ENCODE measurements at regions of chr1 and their contacts with region 1.

Region 1: GRCh38 chr1:48227165-48228013 is 4.9 kb downstream of the SLC5A9 start:
- DNase-seq: peak; percentile 63 to 82 (median 72)
- H3K4me3 ChIP-seq: peak overlapping the region in 1 of 3 experiments; percentile 6
- H3K4me3 Mint-ChIP-seq: no peak overlapping the region
- H3K27ac ChIP-seq: peak overlapping the region; percentile 52 to 65
- H3K27ac Mint-ChIP-seq: no peak overlapping the region
- H3K4me1 ChIP-seq: peaks cover 37 to 38% of the 10 kb centered on the region in 2 donors
- H3K4me1 Mint-ChIP-seq: peaks cover 18% of the 10 kb centered on the region
- H3K27me3 ChIP-seq: no peaks in the 10 kb centered on the region
- H3K27me3 Mint-ChIP-seq: peaks cover 2 to 8% (median 2%) of the 10 kb centered on the region in 3 donors
- CTCF ChIP-seq: no peak

Region 2: DNA sequence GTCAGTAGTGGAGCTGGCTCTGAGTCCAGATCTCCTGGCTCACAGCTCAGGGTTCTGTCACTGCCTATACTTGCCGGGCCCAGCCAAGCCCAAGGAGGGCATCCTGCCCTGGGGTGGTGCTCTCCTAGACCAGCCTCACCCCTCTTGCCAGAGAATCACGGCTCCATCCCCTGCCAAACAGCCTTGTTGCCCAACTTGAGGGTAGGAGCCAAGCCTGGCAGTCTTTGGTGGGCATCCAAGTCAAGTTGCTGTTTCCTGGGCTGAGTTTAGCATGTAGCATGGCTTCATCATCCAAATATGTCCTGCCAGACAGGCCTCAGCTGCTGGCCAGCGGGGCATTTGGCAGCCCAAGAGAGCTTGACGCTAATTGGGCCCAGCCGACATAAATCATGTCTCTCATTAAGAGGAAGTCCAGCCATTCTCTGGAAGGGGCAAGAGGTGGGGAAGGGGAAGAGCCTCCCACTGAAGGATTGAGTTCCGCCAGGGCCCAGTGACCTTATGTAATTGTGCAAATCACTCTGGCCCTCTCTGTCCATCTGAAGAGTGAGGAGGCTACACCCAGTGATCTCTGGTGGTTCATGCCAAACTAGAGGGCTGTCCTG is 207.6 kb before region 1 on chr1:
- intact Hi-C with region 1: loop called in 1 of 2 experiments (anchors 10 kb)
- DNase-seq: no peak
- H3K4me3 ChIP-seq: no peak overlapping the region
- H3K4me3 Mint-ChIP-seq: no peak overlapping the region
- H3K27ac ChIP-seq: no peak overlapping the region
- H3K27ac Mint-ChIP-seq: no peak overlapping the region
- H3K4me1 ChIP-seq: no peaks in the 10 kb centered on the region
- H3K4me1 Mint-ChIP-seq: no peaks in the 10 kb centered on the region
- H3K27me3 ChIP-seq: peaks cover 0 to 3% of the 10 kb centered on the region in 2 donors
- H3K27me3 Mint-ChIP-seq: peaks cover 10 to 22% (median 12%) of the 10 kb centered on the region in 3 donors
- CTCF ChIP-seq: no peak

Region 3: GRCh38 chr1:48387409-48387808 is 160.0 kb after region 1 on chr1:
- intact Hi-C with region 1: no loop called
- DNase-seq: no peak
- H3K4me3 ChIP-seq: no peak overlapping the region
- H3K4me3 Mint-ChIP-seq: no peak overlapping the region
- H3K27ac ChIP-seq: no peak overlapping the region
- H3K27ac Mint-ChIP-seq: peak overlapping the region in 1 of 7 donors; percentile 11
- H3K4me1 ChIP-seq: no peaks in the 10 kb centered on the region
- H3K4me1 Mint-ChIP-seq: no peaks in the 10 kb centered on the region
- H3K27me3 ChIP-seq: no peaks in the 10 kb centered on the region
- H3K27me3 Mint-ChIP-seq: no peaks in the 10 kb centered on the region
- CTCF ChIP-seq: no peak

Region 4: GRCh38 chr1:48999321-48999720 is 771.9 kb after region 1 on chr1:
- intact Hi-C with region 1: no loop called
- DNase-seq: no peak
- H3K4me3 ChIP-seq: no peak overlapping the region
- H3K4me3 Mint-ChIP-seq: no peak overlapping the region
- H3K27ac ChIP-seq: no peak overlapping the region
- H3K27ac Mint-ChIP-seq: no peak overlapping the region
- H3K4me1 ChIP-seq: no peaks in the 10 kb centered on the region
- H3K4me1 Mint-ChIP-seq: no peaks in the 10 kb centered on the region
- H3K27me3 ChIP-seq: no peaks in the 10 kb centered on the region
- H3K27me3 Mint-ChIP-seq: no peaks in the 10 kb centered on the region
- CTCF ChIP-seq: no peak

Measured in CD14-positive monocyte (primary cell).